ENCODE measurements at regions of chr7 and their contacts with region 1.

Region 1: DNA sequence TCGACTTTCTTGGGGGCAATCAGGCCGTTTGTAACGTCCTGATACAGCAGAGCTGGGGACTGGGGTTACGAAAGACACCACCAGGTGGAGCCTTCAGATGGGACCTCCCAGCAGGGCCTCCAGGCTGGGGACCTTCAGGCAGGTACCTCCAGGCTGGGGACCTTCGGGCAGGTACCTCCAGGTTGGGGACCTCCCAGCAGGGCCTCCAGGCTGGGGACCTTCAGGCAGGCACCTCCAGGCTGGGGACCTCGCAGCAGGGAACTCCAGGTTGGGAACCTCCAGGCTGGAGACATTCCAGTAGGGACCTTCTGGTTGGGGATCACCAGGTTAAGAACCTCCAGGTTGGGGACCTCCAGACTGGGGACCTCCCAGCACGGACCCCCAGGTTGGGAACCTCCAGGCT is 23.5 kb upstream of the GPR146 start:
- DNase-seq: peak; percentile 49
- ATAC-seq: no peak
- H3K4me3 ChIP-seq: no peak overlapping the region
- H3K4me3 Mint-ChIP-seq: no peak overlapping the region
- H3K27ac ChIP-seq: no peak overlapping the region
- H3K27ac Mint-ChIP-seq: no peak overlapping the region
- H3K4me1 ChIP-seq: peaks cover 50 to 62% of the 10 kb centered on the region in 2 donors
- H3K4me1 Mint-ChIP-seq: peaks cover 67% of the 10 kb centered on the region
- H3K27me3 ChIP-seq: peaks cover 0 to 2% (median 0%) of the 10 kb centered on the region in 4 experiments
- H3K27me3 Mint-ChIP-seq: no peaks in the 10 kb centered on the region
- CTCF ChIP-seq: peak; percentile 48

Region 2: DNA sequence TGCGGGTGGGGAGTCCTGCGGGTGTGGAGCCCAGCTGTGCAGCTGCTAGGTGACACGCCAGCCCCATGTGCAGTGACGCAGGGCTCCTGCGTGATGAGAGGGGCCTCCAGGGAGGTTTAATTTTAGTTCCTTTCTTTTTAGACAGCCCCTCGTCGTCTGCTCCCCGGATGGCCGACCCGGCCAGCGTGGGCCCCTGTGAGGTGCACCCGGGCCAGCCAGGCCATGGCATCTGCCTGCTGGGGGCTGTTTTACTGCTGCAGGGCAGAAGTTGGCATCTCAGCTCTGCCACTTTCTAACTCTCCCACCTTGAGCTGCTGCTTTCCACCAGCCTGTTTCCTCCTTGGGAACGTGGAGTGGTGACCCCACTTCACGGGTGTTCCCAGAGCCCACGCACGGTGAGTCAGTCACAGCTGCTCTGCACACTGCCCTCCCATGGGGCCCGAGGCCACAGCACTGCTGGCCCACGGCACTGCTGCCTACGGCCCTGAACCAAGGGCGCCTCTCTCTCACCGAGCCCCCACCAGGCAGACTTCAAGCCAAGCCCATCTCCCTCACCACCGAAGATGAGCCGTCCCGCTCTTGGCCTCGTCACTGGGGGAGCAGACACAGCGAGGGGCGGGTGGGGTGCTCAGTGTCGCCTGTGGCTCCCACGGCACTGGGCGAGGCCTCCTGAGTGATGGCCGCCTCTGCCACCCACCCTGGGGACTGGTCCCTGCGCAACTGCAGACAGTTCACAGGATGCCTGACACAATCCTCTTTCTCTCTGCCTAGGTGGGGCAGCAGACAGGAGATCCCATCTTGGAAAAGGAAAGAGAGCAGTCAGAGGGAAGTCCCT is 16.6 kb before region 1 on chr7:
- CTCF ChIA-PET with region 1: interaction called, 14 read pairs
- POLR2A ChIA-PET with region 1: interaction called, 15 read pairs
- intact Hi-C with region 1: loop called (anchors 1 kb)
- DNase-seq: peak; percentile 87
- ATAC-seq: peak; percentile 82
- H3K4me3 ChIP-seq: no peak overlapping the region
- H3K4me3 Mint-ChIP-seq: peak overlapping the region; percentile 76
- H3K27ac ChIP-seq: peak overlapping the region in 1 of 2 donors; percentile 34
- H3K27ac Mint-ChIP-seq: peak overlapping the region; percentile 91
- H3K4me1 ChIP-seq: peaks cover 10 to 26% of the 10 kb centered on the region in 2 donors
- H3K4me1 Mint-ChIP-seq: peaks cover 40% of the 10 kb centered on the region
- H3K27me3 ChIP-seq: no peaks in the 10 kb centered on the region
- H3K27me3 Mint-ChIP-seq: no peaks in the 10 kb centered on the region
- CTCF ChIP-seq: no peak

Measured in B cell (primary cell).